GM12878 (cell line): ENCODE measurements at regions of chr3 and their contacts with region 1.

Region 1: DNA sequence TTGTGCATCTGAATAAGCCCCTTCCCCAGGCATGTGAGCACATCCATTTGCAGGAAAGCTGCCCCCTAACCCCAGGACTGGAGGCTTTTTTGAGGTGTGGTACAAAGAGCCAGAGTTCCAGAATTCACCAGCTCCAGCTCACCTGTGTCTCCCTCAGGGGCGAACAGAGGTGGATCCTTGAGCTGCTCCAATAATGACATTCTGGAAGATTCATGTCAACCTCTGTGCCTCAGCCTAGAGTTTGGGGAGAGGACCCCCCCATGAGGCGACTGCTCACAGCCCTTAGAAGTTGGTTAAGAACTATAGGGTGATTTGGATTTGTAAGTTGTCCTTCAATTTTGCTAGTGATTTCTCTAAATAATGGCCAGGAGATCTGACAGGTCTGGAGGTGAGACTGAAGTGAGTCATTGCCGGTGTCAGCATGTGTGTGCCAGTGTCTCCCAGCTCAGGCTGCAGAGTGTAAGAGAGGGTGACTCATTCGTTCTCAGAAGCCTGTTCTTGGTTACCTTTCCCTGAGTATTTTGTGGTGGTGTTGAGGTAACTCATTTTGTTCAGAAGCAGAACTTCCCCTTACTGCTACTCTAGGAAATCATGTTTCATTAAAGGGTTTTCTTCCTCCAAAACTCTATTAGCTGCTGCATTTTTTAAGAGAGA is 136.9 kb upstream of the TOPAZ1 start:
- DNase-seq: peak; percentile 81
- ATAC-seq: peak; percentile 99
- H3K4me3 ChIP-seq: no peak overlapping the region
- H3K27ac ChIP-seq: peak overlapping the region; percentile 58; the same call in 1 of the 2 replicates
- H3K4me1 ChIP-seq: peaks cover 20% of the 10 kb centered on the region
- H3K27me3 ChIP-seq: no peaks in the 10 kb centered on the region; a peak in 1 of 4 replicates
- CTCF ChIP-seq: no peak
- EP300 ChIP-seq: peak in 1 of 2 experiments; percentile 49; a peak in 1 of 4 replicates
- POLR2A ChIP-seq: no peak
- RAD21 ChIP-seq: no peak

Region 2: DNA sequence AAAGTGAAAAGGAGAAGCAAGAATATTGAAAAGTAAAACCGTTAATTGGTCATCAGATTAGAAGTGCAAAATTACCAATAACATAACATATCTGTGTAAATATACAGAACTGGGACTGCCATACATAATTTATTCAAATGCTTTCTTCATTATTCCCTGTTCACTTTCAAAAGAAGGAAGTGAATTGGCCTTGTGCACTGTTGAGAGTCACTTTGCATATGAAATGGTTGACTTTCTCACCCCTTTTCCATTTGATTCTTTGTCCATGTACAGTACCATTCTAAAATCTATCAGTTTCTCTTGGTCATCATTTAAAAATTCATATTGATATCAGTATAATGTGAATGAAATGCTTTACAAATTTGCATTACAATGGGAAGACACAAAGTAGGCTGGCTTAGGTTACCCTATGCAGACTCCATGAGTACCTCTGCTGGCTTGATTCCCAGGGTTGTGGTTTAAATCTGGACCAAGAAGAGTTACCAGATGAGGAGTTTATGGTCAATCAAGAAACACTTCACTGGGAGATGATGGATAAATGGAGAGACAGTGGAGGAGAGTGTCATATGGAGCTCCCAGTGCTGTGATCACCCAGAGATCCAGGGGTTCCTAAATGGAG is 74.0 kb before region 1 on chr3:
- CTCF ChIA-PET with region 1: interaction called, 3 read pairs
- POLR2A ChIA-PET with region 1: no interaction called
- RAD21 ChIA-PET with region 1: no interaction called
- SMC1A ChIA-PET with region 1: interaction called, 10 read pairs
- in situ Hi-C with region 1: no loop called
- intact Hi-C with region 1: no loop called
- DNase-seq: no peak
- ATAC-seq: no peak
- H3K4me3 ChIP-seq: peak overlapping the region; percentile 45; the same call in 1 of the 2 replicates
- H3K27ac ChIP-seq: peak overlapping the region; percentile 90
- H3K4me1 ChIP-seq: peaks cover 34% of the 10 kb centered on the region
- H3K27me3 ChIP-seq: no peaks in the 10 kb centered on the region
- CTCF ChIP-seq: no peak
- EP300 ChIP-seq: no peak
- POLR2A ChIP-seq: no peak
- RAD21 ChIP-seq: no peak

Region 3: GRCh38 chr3:44045476-44046275 is 59.1 kb before region 1 on chr3:
- CTCF ChIA-PET with region 1: interaction called, 3 read pairs
- POLR2A ChIA-PET with region 1: interaction called, 8 read pairs
- RAD21 ChIA-PET with region 1: interaction called, 13 read pairs
- SMC1A ChIA-PET with region 1: interaction called, 4 read pairs
- in situ Hi-C with region 1: no loop called
- intact Hi-C with region 1: loop called (anchors 2 kb)
- DNase-seq: peak; percentile 98
- ATAC-seq: peak; percentile 93
- H3K4me3 ChIP-seq: no peak overlapping the region
- H3K27ac ChIP-seq: peak overlapping the region; percentile 93
- H3K4me1 ChIP-seq: peaks cover 72% of the 10 kb centered on the region
- H3K27me3 ChIP-seq: no peaks in the 10 kb centered on the region
- CTCF ChIP-seq: no peak
- EP300 ChIP-seq: peak; percentile 81 to 90; a peak in 3 of 4 replicates
- POLR2A ChIP-seq: no peak
- RAD21 ChIP-seq: no peak

Region 4: GRCh38 chr3:44289882-44290462 is 185.2 kb after region 1 on chr3:
- CTCF ChIA-PET with region 1: no interaction called
- POLR2A ChIA-PET with region 1: no interaction called
- RAD21 ChIA-PET with region 1: no interaction called
- SMC1A ChIA-PET with region 1: no interaction called
- in situ Hi-C with region 1: no loop called
- intact Hi-C with region 1: no loop called
- DNase-seq: no peak
- ATAC-seq: no peak
- H3K4me3 ChIP-seq: no peak overlapping the region
- H3K27ac ChIP-seq: no peak overlapping the region
- H3K4me1 ChIP-seq: no peaks in the 10 kb centered on the region
- H3K27me3 ChIP-seq: no peaks in the 10 kb centered on the region; a peak in 1 of 4 replicates
- CTCF ChIP-seq: no peak
- EP300 ChIP-seq: no peak
- POLR2A ChIP-seq: no peak
- RAD21 ChIP-seq: no peak